K562 (cell line): ENCODE measurements at regions of chr1 and their contacts with region 1.

Region 1: GRCh38 chr1:241408170-241408569 is 51.2 kb upstream of the RGS7 start:
- DNase-seq: peak in 2 of 4 experiments; percentile 36 to 46
- ATAC-seq: peak; percentile 89
- H3K4me3 ChIP-seq: no peak overlapping the region
- H3K27ac ChIP-seq: no peak overlapping the region
- H3K4me1 ChIP-seq: no peaks in the 10 kb centered on the region
- H3K27me3 ChIP-seq: no peaks in the 10 kb centered on the region
- CTCF ChIP-seq: peak in 2 of 3 experiments; percentile 53 to 58; a peak in 5 of 6 replicates
- EP300 ChIP-seq: no peak
- POLR2A ChIP-seq: no peak
- RAD21 ChIP-seq: peak; percentile 51 to 67

Region 2: GRCh38 chr1:240888039-240888786 is 520.0 kb before region 1 on chr1:
- CTCF ChIA-PET with region 1: no interaction called
- POLR2A ChIA-PET with region 1: no interaction called
- in situ Hi-C with region 1: no loop called
- intact Hi-C with region 1: loop called (anchors 1 kb)
- DNase-seq: peak; percentile 57 to 71 (median 68)
- ATAC-seq: peak; percentile 91
- H3K4me3 ChIP-seq: no peak overlapping the region
- H3K27ac ChIP-seq: no peak overlapping the region
- H3K4me1 ChIP-seq: no peaks in the 10 kb centered on the region
- H3K27me3 ChIP-seq: no peaks in the 10 kb centered on the region
- CTCF ChIP-seq: peak; percentile 70 to 91 (median 76)
- EP300 ChIP-seq: no peak
- POLR2A ChIP-seq: no peak
- RAD21 ChIP-seq: peak; percentile 73 to 81